Endothelial cell of umbilical vein (primary cell): ENCODE measurements at regions of chr11 and their contacts with region 1.

Region 1: GRCh38 chr11:86193297-86194095 is 51.1 kb upstream of the EED start:
- DNase-seq: peak; percentile 84
- H3K4me3 ChIP-seq: peak overlapping the region in 1 of 3 experiments; percentile 4
- H3K27ac ChIP-seq: peak overlapping the region; percentile 27
- H3K4me1 ChIP-seq: peaks cover 10% of the 10 kb centered on the region
- H3K27me3 ChIP-seq: no peaks in the 10 kb centered on the region
- CTCF ChIP-seq: peak; percentile 71 to 75
- POLR2A ChIP-seq: no peak

Region 2: GRCh38 chr11:85787809-85788805 is 405.4 kb before region 1 on chr11:
- CTCF ChIA-PET with region 1: no interaction called
- POLR2A ChIA-PET with region 1: no interaction called
- dilution Hi-C with region 1: no loop called
- intact Hi-C with region 1: no loop called
- DNase-seq: peak; percentile 23
- H3K4me3 ChIP-seq: no peak overlapping the region
- H3K27ac ChIP-seq: no peak overlapping the region
- H3K4me1 ChIP-seq: no peaks in the 10 kb centered on the region
- H3K27me3 ChIP-seq: peaks cover 3 to 10% of the 10 kb centered on the region in 2 experiments
- CTCF ChIP-seq: no peak
- POLR2A ChIP-seq: no peak

Region 3: GRCh38 chr11:86056351-86056854 is 137.1 kb before region 1 on chr11:
- CTCF ChIA-PET with region 1: interaction called, 12 read pairs
- POLR2A ChIA-PET with region 1: no interaction called
- dilution Hi-C with region 1: no loop called
- intact Hi-C with region 1: no loop called
- DNase-seq: no peak
- H3K4me3 ChIP-seq: no peak overlapping the region
- H3K27ac ChIP-seq: no peak overlapping the region
- H3K4me1 ChIP-seq: peaks cover 11% of the 10 kb centered on the region
- H3K27me3 ChIP-seq: no peaks in the 10 kb centered on the region
- CTCF ChIP-seq: no peak
- POLR2A ChIP-seq: no peak

Region 4: DNA sequence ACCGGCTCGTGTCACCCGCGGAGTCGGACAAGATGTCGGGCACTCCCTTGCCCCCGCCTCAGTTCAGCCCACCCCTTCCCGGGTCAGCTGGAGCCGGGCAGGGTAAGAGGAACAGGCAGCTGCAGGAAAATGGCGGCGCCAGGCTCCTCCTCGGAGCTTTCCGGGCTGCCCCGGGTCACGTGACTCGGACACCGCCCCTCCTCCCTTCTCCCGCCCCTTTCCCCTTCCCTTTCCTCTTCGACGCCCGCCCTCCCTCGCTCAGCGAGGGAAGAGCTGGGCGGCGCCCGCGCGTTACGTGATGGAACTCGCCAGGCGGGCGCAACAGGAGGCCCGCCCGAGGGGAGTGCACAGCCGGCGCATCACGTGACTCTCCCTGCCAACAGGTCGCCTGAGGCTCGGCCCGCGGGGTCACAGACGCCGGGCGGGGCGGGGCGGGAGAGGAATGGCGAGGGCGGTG is 124.5 kb before region 1 on chr11 and contains the start of gene PICALM:
- CTCF ChIA-PET with region 1: interaction called, 90 read pairs
- POLR2A ChIA-PET with region 1: interaction called, 18 read pairs
- dilution Hi-C with region 1: no loop called
- intact Hi-C with region 1: loop called (anchors 1 kb)
- DNase-seq: peak; percentile 99
- H3K4me3 ChIP-seq: peak within 1 kb of the TSS; percentile 47 to 94 (median 89)
- H3K27ac ChIP-seq: peak within 1 kb of the TSS; percentile 100
- H3K4me1 ChIP-seq: peaks cover 27% of the 10 kb centered on the region
- H3K27me3 ChIP-seq: no peaks in the 10 kb centered on the region
- CTCF ChIP-seq: no peak
- POLR2A ChIP-seq: peak; percentile 82
- total RNA-seq, gene PICALM: 181 and 202 TPM in 2 replicates

Region 5: GRCh38 chr11:86151174-86152005 is 42.1 kb before region 1 on chr11:
- CTCF ChIA-PET with region 1: interaction called, 16 read pairs
- POLR2A ChIA-PET with region 1: no interaction called
- dilution Hi-C with region 1: no loop called
- intact Hi-C with region 1: no loop called
- DNase-seq: peak; percentile 68
- H3K4me3 ChIP-seq: no peak overlapping the region
- H3K27ac ChIP-seq: peak overlapping the region; percentile 94
- H3K4me1 ChIP-seq: peaks cover 24% of the 10 kb centered on the region
- H3K27me3 ChIP-seq: no peaks in the 10 kb centered on the region
- CTCF ChIP-seq: no peak
- POLR2A ChIP-seq: no peak

Region 6: DNA sequence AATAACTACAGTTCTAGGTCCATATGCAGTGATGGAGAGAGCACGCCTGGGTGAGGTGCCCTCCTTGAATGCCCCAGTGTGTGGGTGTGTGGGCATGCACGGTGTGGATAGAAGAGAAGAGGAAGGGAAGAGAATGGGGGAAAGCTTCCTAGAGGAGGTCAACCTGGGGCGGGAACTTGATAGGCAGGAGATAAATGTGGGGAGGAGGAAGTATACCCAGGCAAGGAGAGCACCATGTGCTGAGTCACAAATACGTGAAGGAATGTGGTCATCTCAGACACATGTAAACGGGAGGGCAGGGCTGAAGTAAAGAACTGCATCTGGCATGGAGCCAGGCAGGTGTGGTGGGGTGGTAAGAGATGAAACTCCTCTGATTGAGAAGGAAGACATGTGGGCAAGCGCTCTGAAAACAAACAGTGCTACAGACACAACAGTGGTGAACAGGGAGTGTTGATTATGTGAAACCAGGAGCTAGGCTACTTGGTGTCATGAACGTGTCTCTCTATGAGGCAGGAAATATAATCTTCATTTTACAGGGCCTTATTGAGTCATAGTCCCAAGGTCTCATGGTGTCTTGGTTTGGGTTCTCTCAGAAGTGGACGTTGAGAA is 10.4 kb before region 1 on chr11:
- CTCF ChIA-PET with region 1: interaction called, 16 read pairs
- POLR2A ChIA-PET with region 1: no interaction called
- dilution Hi-C with region 1: no loop called
- intact Hi-C with region 1: no loop called
- DNase-seq: no peak
- H3K4me3 ChIP-seq: no peak overlapping the region
- H3K27ac ChIP-seq: no peak overlapping the region
- H3K4me1 ChIP-seq: no peaks in the 10 kb centered on the region
- H3K27me3 ChIP-seq: no peaks in the 10 kb centered on the region
- CTCF ChIP-seq: no peak
- POLR2A ChIP-seq: no peak

Region 7: GRCh38 chr11:86230921-86231430 is 37.5 kb after region 1 on chr11:
- CTCF ChIA-PET with region 1: no interaction called
- POLR2A ChIA-PET with region 1: no interaction called
- dilution Hi-C with region 1: no loop called
- intact Hi-C with region 1: no loop called
- DNase-seq: no peak
- H3K4me3 ChIP-seq: no peak overlapping the region
- H3K27ac ChIP-seq: no peak overlapping the region
- H3K4me1 ChIP-seq: no peaks in the 10 kb centered on the region
- H3K27me3 ChIP-seq: no peaks in the 10 kb centered on the region
- CTCF ChIP-seq: no peak
- POLR2A ChIP-seq: no peak